Gastrocnemius medialis (tissue), 4 donors: ENCODE measurements at regions of chr14 and their contacts with region 1.

Region 1: GRCh38 chr14:34128665-34129064 is 177.8 kb upstream of the EGLN3 start:
- DNase-seq: peak; percentile 44 to 70
- ATAC-seq: peak; percentile 25 to 29
- H3K4me3 ChIP-seq: no peak overlapping the region
- H3K27ac ChIP-seq: peak overlapping the region; percentile 89 to 93 (median 92)
- H3K4me1 ChIP-seq: peaks cover 35 to 40% of the 10 kb centered on the region in 2 donors
- H3K27me3 ChIP-seq: no peaks in the 10 kb centered on the region
- CTCF ChIP-seq: no peak
- POLR2A ChIP-seq: no peak

Region 2: DNA sequence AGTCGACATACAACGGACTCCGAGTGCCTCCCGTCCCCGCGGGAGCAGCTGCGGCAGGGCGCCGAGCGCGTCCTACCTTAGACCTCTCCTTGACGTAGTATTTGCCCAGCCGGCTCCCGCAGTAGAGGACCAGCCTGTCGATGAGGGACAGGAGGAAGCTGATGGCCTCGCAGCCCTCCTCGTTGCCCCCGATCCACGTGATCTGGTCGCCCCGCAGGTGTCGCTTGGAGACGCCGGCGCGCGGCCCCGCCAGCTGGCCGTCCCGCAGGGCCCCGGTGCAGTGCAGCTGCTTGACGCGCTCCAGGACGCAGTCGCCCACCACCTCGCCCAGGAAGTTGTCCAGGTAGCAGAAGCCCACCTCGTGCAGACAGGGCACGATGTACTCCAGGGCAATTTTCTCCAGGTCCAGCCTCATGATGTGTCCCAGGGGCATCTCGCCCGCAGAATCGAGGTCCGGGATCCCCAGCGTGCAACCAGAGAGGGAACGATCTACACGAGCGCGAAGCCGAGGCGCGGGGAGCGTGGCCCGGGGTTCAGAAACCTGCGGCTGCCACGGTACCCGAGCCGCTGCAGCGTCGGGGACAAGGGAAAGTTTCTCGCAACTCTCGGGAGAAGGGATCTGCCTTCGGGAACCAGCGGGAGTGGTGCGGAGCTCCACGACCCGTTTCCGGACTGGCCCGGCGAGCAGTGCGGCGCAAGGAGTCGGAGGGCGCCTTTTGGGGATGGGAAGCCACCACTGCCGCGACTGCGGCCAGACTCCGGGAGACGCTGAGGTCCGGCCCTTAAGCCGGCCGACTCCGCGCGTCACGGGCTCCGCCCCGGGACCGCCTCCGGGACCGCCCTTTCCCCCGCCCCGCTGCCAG is 178.1 kb before region 1 on chr14 and contains the start of gene EGLN3:
- in situ Hi-C with region 1: no loop called
- intact Hi-C with region 1: loop called (anchors 1 kb)
- DNase-seq: peak; percentile 78 to 86
- ATAC-seq: peak; percentile 91 to 92
- H3K4me3 ChIP-seq: peak within 1 kb of the TSS; percentile 81 to 91 (median 83)
- H3K27ac ChIP-seq: peak within 1 kb of the TSS; percentile 78 to 88 (median 82)
- H3K4me1 ChIP-seq: peaks cover 11 to 14% of the 10 kb centered on the region in 2 donors
- H3K27me3 ChIP-seq: no peaks in the 10 kb centered on the region
- CTCF ChIP-seq: no peak
- POLR2A ChIP-seq: peak; percentile 96 to 99
- total RNA-seq, gene EGLN3: 9.4 to 15.7 (median 13.5) TPM

Region 3: GRCh38 chr14:34081576-34082136 is 47.0 kb before region 1 on chr14:
- in situ Hi-C with region 1: no loop called
- intact Hi-C with region 1: loop called (anchors 1 kb)
- DNase-seq: peak in 1 of 2 donors; percentile 26
- ATAC-seq: peak; percentile 48 to 60
- H3K4me3 ChIP-seq: peak overlapping the region in 1 of 4 donors; percentile 7
- H3K27ac ChIP-seq: peak overlapping the region; percentile 83 to 95 (median 91)
- H3K4me1 ChIP-seq: peaks cover 36 to 48% of the 10 kb centered on the region in 2 donors
- H3K27me3 ChIP-seq: no peaks in the 10 kb centered on the region
- CTCF ChIP-seq: no peak
- POLR2A ChIP-seq: peak in 1 of 2 donors; percentile 3

Region 4: GRCh38 chr14:34147461-34147860 is 18.8 kb after region 1 on chr14:
- in situ Hi-C with region 1: no loop called
- intact Hi-C with region 1: no loop called
- DNase-seq: no peak
- ATAC-seq: no peak
- H3K4me3 ChIP-seq: no peak overlapping the region
- H3K27ac ChIP-seq: no peak overlapping the region
- H3K4me1 ChIP-seq: no peaks in the 10 kb centered on the region
- H3K27me3 ChIP-seq: no peaks in the 10 kb centered on the region
- CTCF ChIP-seq: no peak
- POLR2A ChIP-seq: no peak

Region 5: GRCh38 chr14:34172550-34173368 is 44.1 kb after region 1 on chr14:
- in situ Hi-C with region 1: no loop called
- intact Hi-C with region 1: loop called (anchors 5 kb)
- DNase-seq: peak in 1 of 2 donors; percentile 47
- ATAC-seq: peak in 1 of 2 donors; percentile 75
- H3K4me3 ChIP-seq: no peak overlapping the region
- H3K27ac ChIP-seq: peak overlapping the region in 1 of 4 donors; percentile 58
- H3K4me1 ChIP-seq: peaks cover 3 to 15% of the 10 kb centered on the region in 2 donors
- H3K27me3 ChIP-seq: no peaks in the 10 kb centered on the region
- CTCF ChIP-seq: no peak
- POLR2A ChIP-seq: no peak

Region 6: DNA sequence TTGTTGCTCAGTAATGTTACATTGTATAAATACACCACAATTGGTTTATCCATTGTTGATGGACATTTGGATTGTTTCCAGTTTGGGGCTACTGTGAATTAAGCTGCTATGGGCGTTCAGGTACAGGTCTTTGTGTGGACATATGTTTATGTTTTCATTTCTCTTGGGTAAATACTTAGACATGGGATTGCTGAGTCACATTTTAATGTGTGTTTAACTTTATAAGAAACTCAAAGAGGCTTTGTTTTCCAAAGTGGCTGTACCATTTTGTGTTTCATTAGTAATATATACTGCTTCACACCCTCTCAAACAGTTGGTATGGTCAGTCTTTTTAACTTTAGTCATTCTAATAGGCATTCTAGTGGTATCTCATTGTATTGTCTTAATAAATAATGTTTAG is 108.4 kb after region 1 on chr14:
- in situ Hi-C with region 1: no loop called
- intact Hi-C with region 1: loop called (anchors 2 kb)
- DNase-seq: no peak
- ATAC-seq: no peak
- H3K4me3 ChIP-seq: no peak overlapping the region
- H3K27ac ChIP-seq: peak overlapping the region in 1 of 4 donors; percentile 79
- H3K4me1 ChIP-seq: peaks cover 38 to 42% of the 10 kb centered on the region in 2 donors
- H3K27me3 ChIP-seq: no peaks in the 10 kb centered on the region
- CTCF ChIP-seq: no peak
- POLR2A ChIP-seq: no peak

Region 7: DNA sequence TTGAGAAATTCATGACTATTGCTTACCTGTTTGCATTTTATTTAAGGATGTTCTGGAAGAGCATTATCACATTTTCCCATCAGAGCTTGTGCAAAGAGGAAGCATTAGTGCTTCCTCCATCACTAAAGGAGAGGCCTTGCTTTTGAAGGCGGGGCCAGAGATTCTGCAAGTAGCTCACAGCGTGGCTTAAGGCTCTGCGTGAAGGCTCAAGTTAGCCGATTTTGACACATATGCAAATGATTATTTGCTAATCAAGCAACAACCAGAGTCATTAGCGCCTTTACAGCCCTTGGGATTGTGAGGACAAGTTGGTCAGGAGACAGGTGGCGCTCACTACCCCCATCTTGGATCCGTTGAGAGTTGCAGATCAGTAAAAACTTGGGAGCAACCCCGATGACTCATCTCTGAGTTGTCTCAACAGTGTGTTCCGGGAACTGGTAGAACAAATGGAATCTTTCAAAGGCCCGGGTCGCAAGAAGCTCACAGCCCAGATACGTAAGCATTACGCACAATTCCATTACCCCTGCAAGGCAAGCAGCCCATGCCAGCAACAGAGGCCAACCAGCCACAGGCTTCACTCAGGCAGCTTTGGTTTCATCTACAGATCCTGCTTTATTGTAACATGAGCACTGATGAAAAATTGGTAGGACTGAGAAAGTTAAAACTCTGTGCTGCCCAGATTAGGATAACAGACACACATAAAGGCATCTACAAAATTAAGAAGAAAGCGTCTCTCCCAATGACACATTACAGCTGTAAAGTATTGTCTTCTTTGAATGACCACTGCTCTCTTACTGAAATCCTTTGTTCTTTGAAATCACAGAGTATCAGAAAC is 368.2 kb after region 1 on chr14:
- in situ Hi-C with region 1: no loop called
- intact Hi-C with region 1: loop called (anchors 5 kb)
- DNase-seq: peak; percentile 81 to 88
- ATAC-seq: peak; percentile 99
- H3K4me3 ChIP-seq: peak overlapping the region in 3 of 4 donors; percentile 15 to 29 (median 18)
- H3K27ac ChIP-seq: peak overlapping the region; percentile 72 to 87 (median 84)
- H3K4me1 ChIP-seq: peaks cover 15 to 18% of the 10 kb centered on the region in 2 donors
- H3K27me3 ChIP-seq: no peaks in the 10 kb centered on the region
- CTCF ChIP-seq: peak in 1 of 5 experiments; percentile 32
- POLR2A ChIP-seq: peak; percentile 21 to 55